A549 (cell line): ENCODE measurements at regions of chr15 and their contacts with region 1.

Region 1: DNA sequence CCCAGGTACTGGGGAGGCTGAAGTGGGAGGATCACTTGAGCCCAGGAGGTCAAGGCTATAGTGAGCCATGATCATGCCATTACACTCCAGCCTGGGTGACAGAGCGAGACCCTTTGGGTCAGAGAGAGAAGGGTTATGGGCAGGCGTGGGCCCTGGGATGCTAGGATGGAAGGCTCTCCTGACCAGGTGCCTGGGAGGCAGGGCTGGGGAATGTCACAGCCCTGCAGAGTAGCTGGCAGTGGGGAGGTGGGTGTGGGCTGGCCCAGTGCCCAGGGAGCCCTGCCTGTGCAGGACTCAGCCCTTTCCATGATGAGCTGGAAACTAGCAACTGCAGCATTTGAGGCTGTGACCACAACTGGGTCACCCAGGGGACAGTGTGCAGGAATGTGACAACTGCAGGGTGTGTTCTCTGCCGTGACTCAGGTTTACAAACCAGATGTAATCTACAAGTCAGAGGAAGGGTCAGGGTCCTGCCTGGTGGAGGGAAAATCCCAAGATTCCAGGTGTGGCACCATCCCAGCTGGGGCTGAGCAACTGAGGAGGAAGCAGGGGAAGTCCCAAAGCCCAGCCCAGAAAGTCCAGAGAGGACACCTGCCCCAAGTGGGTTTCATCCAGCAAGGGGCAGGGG is 45.4 kb downstream of the SLC28A1 start:
- DNase-seq: peak; percentile 71 to 95
- ATAC-seq: peak; percentile 67 to 76
- H3K4me3 ChIP-seq: no peak overlapping the region
- H3K27ac ChIP-seq: peak overlapping the region; percentile 54 to 85
- H3K4me1 ChIP-seq: peaks cover 46% of the 10 kb centered on the region
- CTCF ChIP-seq: no peak
- EP300 ChIP-seq: no peak
- POLR2A ChIP-seq: no peak
- RAD21 ChIP-seq: no peak

Region 2: DNA sequence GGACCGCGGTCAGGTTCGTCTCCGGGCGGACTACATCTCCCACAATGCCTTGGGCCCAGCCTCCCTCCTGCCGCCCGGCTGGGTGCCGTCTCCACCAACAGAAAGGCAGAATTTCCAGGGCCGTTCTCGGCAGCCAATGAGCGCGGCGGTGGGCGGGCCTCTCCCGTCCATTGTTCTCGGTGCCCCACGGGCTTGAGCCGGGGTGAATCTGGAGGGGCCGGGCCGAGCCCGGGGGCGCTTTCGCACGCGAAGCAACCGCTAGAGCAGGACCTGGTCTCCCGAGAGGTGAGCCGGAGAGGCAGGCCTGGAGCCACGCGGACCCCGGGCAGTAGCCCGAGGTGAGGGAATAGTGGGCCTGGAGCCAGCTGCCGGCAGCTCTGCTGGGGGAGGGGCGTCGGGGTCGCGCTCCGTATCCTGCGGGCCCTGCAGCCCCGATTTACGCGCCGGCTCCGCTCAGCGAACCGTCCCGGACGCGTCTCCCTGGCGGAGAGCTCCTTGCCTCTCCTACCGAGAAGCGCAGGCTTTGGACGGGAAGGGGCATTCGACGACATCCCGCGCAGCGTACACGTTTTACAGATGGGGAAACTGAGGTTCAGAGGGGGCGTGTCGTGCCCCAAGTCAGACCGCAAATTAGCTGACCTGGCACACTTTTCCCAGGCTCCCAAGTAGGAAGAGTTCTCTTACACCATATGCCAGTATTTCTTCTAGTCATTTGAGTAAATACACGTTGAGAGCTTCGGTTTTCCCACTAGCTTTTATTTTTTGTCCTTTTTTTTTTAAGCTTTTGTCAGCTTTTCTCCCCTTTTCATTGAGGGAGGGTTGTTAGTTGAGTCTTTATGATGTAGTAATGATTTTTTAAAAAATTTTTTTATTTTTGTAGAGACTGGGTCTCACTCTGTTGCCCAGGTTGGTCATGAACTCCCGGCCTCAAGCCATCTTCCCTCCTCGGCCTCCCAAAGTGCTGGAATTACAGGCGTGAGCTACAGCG is 328.7 kb before region 1 on chr15 and contains the start of gene ZSCAN2:
- CTCF ChIA-PET with region 1: interaction called, 13 read pairs
- POLR2A ChIA-PET with region 1: no interaction called
- DNase-seq: peak; percentile 95 to 99
- ATAC-seq: peak; percentile 97 to 98
- H3K4me3 ChIP-seq: peak within 1 kb of the TSS; percentile 72
- H3K27ac ChIP-seq: peak within 1 kb of the TSS; percentile 78 to 88
- H3K4me1 ChIP-seq: peaks cover 27% of the 10 kb centered on the region
- CTCF ChIP-seq: no peak
- EP300 ChIP-seq: no peak
- POLR2A ChIP-seq: peak; percentile 36
- RAD21 ChIP-seq: no peak
- polyA plus RNA-seq, gene ZSCAN2: 16.2 and 16.5 TPM in 2 replicates

Region 3: DNA sequence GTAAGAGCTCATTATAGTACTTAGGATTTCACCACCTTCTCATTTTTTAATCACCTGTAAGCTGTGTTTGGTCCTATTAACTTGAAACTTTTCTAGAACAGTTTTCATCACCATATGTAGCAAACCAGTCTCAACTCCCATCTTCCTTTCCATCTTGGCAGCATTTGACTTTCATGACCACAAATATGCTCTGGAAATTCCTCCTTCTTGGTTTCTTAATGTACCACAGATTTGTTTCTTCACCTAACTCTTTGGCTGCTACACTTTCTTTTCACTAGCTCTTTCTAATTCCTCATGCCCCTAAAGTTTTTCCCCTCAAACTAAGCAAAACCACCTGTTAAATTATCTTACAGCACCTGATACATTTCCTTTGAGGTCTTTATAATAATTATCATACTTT is 258.6 kb before region 1 on chr15:
- CTCF ChIA-PET with region 1: interaction called, 11 read pairs
- POLR2A ChIA-PET with region 1: no interaction called
- DNase-seq: no peak
- ATAC-seq: no peak
- H3K4me3 ChIP-seq: no peak overlapping the region
- H3K27ac ChIP-seq: no peak overlapping the region
- H3K4me1 ChIP-seq: no peaks in the 10 kb centered on the region
- CTCF ChIP-seq: no peak
- EP300 ChIP-seq: no peak
- POLR2A ChIP-seq: no peak
- RAD21 ChIP-seq: no peak

Region 4: DNA sequence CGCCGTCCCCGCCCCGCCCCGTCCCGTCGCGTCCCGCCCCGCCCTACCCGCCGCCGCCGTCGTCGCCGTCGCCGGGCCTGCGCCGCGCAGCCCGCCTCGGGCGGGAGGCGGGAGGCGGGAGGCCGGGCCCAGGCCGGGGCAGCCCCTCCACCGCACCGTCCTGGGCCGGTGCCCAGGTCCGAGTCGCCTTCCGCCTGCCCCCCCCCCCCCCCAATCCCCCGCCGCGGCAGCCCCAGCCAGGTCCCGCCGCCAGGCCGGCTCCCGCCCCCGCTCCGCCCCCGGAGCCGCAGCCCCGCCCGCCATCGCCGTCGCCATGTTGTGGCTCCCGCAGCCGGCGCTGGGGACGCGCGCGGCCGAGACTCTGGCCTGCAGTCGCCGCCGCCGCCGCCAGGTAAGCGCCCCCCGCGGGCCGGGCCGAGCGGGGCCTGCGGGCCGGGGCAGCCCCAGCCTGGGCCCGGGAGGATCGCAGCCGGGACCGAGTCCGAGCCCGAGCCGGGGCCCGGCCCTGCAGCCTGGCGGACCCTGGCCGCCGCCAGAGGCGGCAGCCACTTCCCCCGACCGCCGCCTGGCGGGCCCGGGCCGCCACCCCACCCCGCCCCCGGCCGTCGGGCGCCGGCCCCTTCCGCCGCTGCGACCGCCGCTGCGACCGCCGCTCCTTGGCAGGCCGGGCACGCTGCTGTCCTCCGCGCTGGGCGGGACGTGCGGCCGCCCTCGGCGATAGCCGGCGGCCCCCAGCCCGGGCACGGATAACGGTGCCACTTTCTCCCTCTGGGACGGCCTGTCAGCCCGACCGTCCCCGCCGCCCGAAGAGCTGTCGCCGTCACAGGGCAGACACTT is 181.4 kb before region 1 on chr15 and contains the start of gene ZNF592:
- CTCF ChIA-PET with region 1: interaction called, 14 read pairs
- POLR2A ChIA-PET with region 1: interaction called, 4 read pairs
- DNase-seq: peak; percentile 60 to 81
- ATAC-seq: peak; percentile 58 to 76
- H3K4me3 ChIP-seq: peak within 1 kb of the TSS; percentile 92
- H3K27ac ChIP-seq: peak within 1 kb of the TSS; percentile 96 to 98
- H3K4me1 ChIP-seq: peaks cover 62% of the 10 kb centered on the region
- CTCF ChIP-seq: peak; percentile 63
- EP300 ChIP-seq: no peak
- POLR2A ChIP-seq: peak; percentile 68
- RAD21 ChIP-seq: peak in 1 of 2 experiments; percentile 41; a peak in 1 of 5 replicates
- polyA plus RNA-seq, gene ZNF592: 12.4 and 15.6 TPM in 2 replicates

Region 5: DNA sequence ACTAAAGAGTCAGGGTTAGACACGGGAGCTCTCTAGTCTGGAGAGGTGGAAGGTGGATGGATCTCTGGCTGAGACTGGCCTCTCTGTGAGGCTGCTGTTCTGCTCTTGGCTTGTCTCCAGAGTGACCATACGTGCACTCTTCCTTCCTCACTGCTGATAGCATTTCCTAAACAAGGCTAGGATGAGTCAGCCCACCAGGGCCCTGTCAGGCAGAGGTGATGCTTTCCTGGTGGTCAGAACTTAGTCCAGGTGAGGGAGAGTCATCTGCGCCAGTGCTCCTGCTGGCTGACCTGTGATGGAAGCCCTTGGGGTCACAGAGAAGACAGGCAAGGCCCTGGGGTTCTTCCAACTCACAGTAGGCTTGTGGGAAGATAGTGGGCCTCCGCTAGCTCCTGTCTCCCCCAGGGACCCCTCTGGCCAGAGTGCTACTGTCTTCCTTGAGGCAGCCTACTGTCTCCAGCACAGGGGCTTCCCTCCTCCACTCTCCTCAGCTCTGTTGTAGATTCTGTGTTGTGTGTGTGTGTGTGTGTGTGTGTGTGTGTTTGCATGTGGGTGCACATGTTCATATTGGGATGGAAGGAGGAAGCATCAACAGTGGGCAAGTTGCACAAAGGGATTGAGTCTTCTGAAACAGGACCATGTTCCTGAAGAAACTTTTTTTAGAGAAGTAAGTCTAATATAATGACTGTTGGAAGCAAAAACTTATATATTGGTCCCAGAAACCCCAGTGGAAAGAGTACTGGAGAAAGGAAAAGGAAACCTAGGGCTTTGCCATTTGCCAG is 96.2 kb before region 1 on chr15:
- CTCF ChIA-PET with region 1: interaction called, 31 read pairs
- POLR2A ChIA-PET with region 1: no interaction called
- DNase-seq: no peak
- ATAC-seq: peak in 1 of 2 experiments; percentile 56; a peak in 3 of 6 replicates
- H3K4me3 ChIP-seq: no peak overlapping the region
- H3K27ac ChIP-seq: peak overlapping the region in 1 of 2 experiments; percentile 18; a peak in 2 of 6 replicates
- H3K4me1 ChIP-seq: peaks cover 14% of the 10 kb centered on the region
- CTCF ChIP-seq: no peak
- EP300 ChIP-seq: no peak
- POLR2A ChIP-seq: no peak
- RAD21 ChIP-seq: no peak

Region 6: GRCh38 chr15:84947947-84948830 is 18.3 kb after region 1 on chr15:
- CTCF ChIA-PET with region 1: interaction called, 78 read pairs
- POLR2A ChIA-PET with region 1: no interaction called
- DNase-seq: peak in 1 of 2 experiments; percentile 43
- ATAC-seq: peak; percentile 36 to 74; a peak in 4 of 6 replicates
- H3K4me3 ChIP-seq: no peak overlapping the region
- H3K27ac ChIP-seq: peak overlapping the region in 1 of 2 experiments; percentile 55; a peak in 3 of 6 replicates
- H3K4me1 ChIP-seq: peaks cover 15% of the 10 kb centered on the region; the same call in 2 of the 3 replicates
- CTCF ChIP-seq: no peak
- EP300 ChIP-seq: no peak
- POLR2A ChIP-seq: no peak
- RAD21 ChIP-seq: no peak